ENCODE measurements at regions of chr6 and their contacts with region 1.

Region 1: DNA sequence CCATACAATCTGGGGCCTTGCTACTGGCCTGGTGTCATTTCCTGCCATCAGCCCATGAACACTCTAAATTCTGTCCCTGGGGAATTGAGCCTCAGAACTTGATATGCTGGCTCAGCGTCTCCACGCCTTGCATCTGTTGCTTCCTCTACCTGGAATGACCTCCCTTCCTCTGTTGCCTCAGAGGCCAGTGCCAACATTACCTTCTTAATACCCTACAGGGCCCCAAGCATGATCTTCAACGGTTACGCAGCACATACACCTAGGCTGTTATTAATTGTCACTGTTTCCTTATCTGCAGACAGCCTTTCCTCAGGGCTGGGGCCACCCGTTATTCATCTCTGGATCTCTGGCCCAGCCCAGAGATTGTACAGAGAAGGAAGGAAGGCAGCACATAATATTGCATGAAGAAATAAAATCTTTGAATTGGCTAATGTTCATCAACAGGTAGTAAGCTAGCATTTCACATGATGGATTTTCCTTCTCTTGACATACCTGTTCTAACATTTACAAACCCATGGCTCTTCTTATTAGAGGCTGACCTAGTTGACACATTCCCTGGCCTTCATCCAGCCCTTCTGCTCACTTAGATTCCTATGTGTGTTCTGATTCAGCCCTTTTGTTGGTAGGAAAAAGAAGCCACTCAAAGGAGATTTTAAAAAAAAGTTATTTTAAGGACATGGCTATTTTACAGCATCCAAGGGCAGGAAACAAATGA is 8.4 kb upstream of the RNF182 start:
- DNase-seq: no peak
- ATAC-seq: peak; percentile 53
- H3K4me3 ChIP-seq: no peak overlapping the region
- H3K27ac ChIP-seq: no peak overlapping the region
- H3K4me1 ChIP-seq: no peaks in the 10 kb centered on the region
- H3K27me3 ChIP-seq: peaks cover 4 to 27% of the 10 kb centered on the region in 2 donors
- CTCF ChIP-seq: no peak

Region 2: DNA sequence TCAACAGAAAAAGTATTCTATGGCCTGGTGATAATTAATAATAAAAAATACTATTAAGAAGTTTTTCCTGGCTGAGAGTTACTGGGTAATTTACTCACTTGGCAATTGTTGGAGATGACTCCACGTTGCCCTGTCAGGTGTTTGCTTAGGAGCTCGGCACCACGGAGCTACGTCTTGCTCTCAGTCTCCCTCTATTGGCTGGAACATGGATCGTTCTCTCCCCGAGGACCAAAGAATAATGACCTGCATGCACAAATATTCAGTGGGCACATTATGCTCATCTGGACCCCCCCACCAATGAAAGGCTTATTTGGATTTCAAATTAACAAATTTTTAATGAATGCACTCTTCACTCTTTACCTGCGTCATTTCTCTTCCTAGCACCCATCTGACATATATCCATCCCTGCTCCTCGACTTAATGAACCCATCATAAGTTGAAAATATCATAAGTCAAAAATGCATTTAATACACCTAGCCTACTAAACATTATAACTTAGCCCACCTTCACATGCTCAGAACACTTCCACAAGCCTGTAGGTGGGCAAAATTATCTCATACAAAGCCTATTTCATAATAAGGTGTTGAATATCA is 130.2 kb after region 1 on chr6:
- intact Hi-C with region 1: loop called in 1 of 2 experiments (anchors 10 kb)
- DNase-seq: peak in 1 of 4 donors; percentile 39
- ATAC-seq: peak; percentile 93
- H3K4me3 ChIP-seq: no peak overlapping the region
- H3K27ac ChIP-seq: no peak overlapping the region
- H3K4me1 ChIP-seq: no peaks in the 10 kb centered on the region
- H3K27me3 ChIP-seq: peaks cover 0 to 13% of the 10 kb centered on the region in 2 donors
- CTCF ChIP-seq: peak; percentile 51 to 54

Region 3: GRCh38 chr6:14144678-14145113 is 228.3 kb after region 1 on chr6:
- intact Hi-C with region 1: loop called in 1 of 2 experiments (anchors 10 kb)
- DNase-seq: peak in 3 of 4 donors; percentile 60 to 87 (median 61)
- ATAC-seq: peak; percentile 88
- H3K4me3 ChIP-seq: no peak overlapping the region
- H3K27ac ChIP-seq: no peak overlapping the region
- H3K4me1 ChIP-seq: peaks cover 0 to 7% of the 10 kb centered on the region in 2 donors
- H3K27me3 ChIP-seq: no peaks in the 10 kb centered on the region
- CTCF ChIP-seq: peak; percentile 97

Measured in left lung (tissue), 14 donors.